Common myeloid progenitor, CD34-positive (primary cell): ENCODE measurements at regions of chr1 and their contacts with region 1.

Region 1: DNA sequence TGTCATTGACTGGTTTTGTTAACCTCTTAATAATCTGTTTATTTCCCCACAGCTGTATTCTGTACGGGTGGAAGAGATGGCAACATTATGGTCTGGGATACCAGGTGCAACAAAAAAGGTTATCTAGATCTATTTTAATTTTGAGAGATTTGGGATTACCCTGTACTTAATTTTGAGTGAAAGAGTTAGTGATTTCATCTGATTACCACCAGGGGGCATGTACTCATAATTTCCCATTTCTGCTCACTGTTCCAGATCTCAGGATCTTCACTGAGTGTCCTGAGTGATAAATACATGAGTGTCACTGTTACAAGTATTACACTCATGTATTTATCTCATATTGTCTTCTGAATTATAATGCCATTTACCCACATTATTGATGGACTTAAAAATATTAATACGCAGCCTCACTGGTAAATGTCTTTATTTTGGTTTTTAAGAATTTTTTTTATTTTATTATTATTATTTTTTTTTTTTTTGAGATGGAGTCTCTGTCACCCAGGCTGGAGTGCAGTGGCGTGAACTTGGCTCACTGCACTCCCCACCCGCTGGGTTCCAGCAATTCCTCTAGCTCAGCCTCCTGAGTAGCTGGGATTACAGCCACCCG is 27.4 kb downstream of the DTL start:
- DNase-seq: peak; percentile 47 to 68 (median 61)
- H3K4me3 ChIP-seq: no peak overlapping the region
- H3K27ac ChIP-seq: no peak overlapping the region
- H3K4me1 ChIP-seq: no peaks in the 10 kb centered on the region
- H3K27me3 ChIP-seq: no peaks in the 10 kb centered on the region

Region 2: GRCh38 chr1:211874521-211875347 is 188.2 kb before region 1 on chr1:
- CTCF ChIA-PET with region 1: no interaction called
- POLR2A ChIA-PET with region 1: no interaction called
- DNase-seq: no peak
- H3K4me3 ChIP-seq: no peak overlapping the region
- H3K27ac ChIP-seq: no peak overlapping the region
- H3K4me1 ChIP-seq: no peaks in the 10 kb centered on the region
- H3K27me3 ChIP-seq: no peaks in the 10 kb centered on the region

Region 3: GRCh38 chr1:212045981-212046380 is 17.0 kb before region 1 on chr1:
- CTCF ChIA-PET with region 1: interaction called, 26 read pairs
- POLR2A ChIA-PET with region 1: no interaction called
- DNase-seq: no peak
- H3K4me3 ChIP-seq: no peak overlapping the region
- H3K27ac ChIP-seq: no peak overlapping the region
- H3K4me1 ChIP-seq: peaks cover 0 to 1% (median 0%) of the 10 kb centered on the region in 4 experiments
- H3K27me3 ChIP-seq: no peaks in the 10 kb centered on the region

Region 4: DNA sequence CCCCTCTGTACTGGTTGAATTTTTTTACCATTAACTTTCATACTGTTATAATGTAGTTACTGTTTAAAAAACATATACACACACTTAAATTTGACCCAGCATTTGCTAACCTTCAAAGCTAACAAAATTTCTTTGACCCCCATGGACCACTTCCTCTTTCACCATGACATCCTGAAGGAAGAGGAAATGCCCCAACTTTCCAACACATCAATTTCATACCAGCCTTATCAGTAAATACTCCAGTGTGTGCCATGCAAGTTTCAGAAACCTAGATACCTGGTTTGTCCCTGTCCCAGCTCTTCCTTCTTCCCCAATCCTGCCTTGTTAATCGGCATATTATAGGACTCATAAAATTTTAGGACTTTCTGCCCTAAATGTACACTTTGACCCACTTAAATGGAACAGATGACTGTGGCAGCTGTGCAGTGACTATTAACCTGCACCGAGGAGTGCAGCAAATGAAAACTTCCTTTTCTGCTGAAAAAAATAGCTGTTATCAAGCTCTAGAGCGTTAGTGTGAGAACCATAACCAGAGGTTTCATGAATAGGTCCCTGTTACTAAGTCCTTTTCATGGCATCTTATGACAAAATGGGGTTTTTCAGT is 26.7 kb after region 1 on chr1:
- CTCF ChIA-PET with region 1: no interaction called
- POLR2A ChIA-PET with region 1: no interaction called
- DNase-seq: peak in 1 of 3 donors; percentile 24
- H3K4me3 ChIP-seq: peak overlapping the region in 1 of 7 experiments; percentile 29
- H3K27ac ChIP-seq: no peak overlapping the region
- H3K4me1 ChIP-seq: peaks cover 10 to 19% (median 15%) of the 10 kb centered on the region in 4 experiments
- H3K27me3 ChIP-seq: no peaks in the 10 kb centered on the region

Region 5: GRCh38 chr1:212291505-212292134 is 228.7 kb after region 1 on chr1:
- CTCF ChIA-PET with region 1: interaction called, 17 read pairs
- POLR2A ChIA-PET with region 1: no interaction called
- DNase-seq: peak; percentile 72 to 77 (median 77)
- H3K4me3 ChIP-seq: no peak overlapping the region
- H3K27ac ChIP-seq: peak overlapping the region in 1 of 2 experiments; percentile 52
- H3K4me1 ChIP-seq: peaks cover 35 to 66% (median 38%) of the 10 kb centered on the region in 4 experiments
- H3K27me3 ChIP-seq: no peaks in the 10 kb centered on the region

Region 6: DNA sequence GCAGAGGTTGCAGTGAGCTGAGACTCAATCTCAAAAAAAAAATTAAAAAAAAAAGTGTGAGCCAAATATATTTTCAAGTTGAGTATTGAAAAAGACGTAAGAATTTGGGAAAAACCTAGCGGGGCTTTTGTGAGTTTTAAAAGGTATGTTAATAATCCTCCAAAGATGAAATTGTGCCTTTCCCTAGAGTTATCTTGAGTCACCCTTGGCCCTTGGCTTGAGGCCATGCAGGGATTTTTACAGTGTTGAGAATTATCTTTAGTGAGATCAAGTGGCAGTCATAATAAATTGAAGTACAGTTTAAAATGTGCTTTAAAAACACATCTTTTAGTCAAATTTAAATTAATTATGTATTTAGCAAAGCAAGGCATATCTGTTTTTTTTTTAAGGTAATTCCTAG is 255.0 kb after region 1 on chr1:
- CTCF ChIA-PET with region 1: no interaction called
- POLR2A ChIA-PET with region 1: no interaction called
- DNase-seq: no peak
- H3K4me3 ChIP-seq: no peak overlapping the region
- H3K27ac ChIP-seq: no peak overlapping the region
- H3K4me1 ChIP-seq: no peaks in the 10 kb centered on the region
- H3K27me3 ChIP-seq: no peaks in the 10 kb centered on the region

Region 7: DNA sequence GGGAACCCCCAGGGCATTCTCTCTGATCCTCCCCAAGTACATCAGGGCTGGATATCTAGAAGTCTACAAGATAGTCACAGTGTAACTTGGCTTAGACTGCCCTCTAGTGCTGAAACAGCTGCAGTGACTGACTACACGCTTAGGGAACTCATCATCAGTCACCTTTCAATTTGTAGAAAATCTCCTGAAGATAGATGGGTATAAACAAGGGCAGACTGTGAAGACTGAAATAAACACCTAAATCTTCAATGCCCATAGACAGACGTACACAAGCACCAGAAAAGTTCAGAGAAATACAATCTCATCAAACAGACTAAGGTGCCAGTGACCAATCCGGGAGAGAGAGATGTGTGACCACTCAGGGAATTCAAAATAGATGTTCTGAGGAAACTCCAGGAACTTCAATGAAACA is 305.1 kb after region 1 on chr1:
- CTCF ChIA-PET with region 1: interaction called, 43 read pairs
- POLR2A ChIA-PET with region 1: no interaction called
- DNase-seq: peak; percentile 75 to 89 (median 86)
- H3K4me3 ChIP-seq: no peak overlapping the region
- H3K27ac ChIP-seq: no peak overlapping the region
- H3K4me1 ChIP-seq: no peaks in the 10 kb centered on the region
- H3K27me3 ChIP-seq: no peaks in the 10 kb centered on the region